CD4-positive, alpha-beta memory T cell (primary cell): ENCODE measurements at regions of chr10 and their contacts with region 1.

Region 1: GRCh38 chr10:89029785-89030437 is 39.3 kb downstream of the FAS start:
- DNase-seq: peak; percentile 48 to 63 (median 59)
- H3K4me3 ChIP-seq: no peak overlapping the region
- H3K4me3 Mint-ChIP-seq: peak overlapping the region in 1 of 8 donors; percentile 17
- H3K27ac ChIP-seq: no peak overlapping the region
- H3K27ac Mint-ChIP-seq: peak overlapping the region in 2 of 7 donors; percentile 5 to 42
- H3K4me1 ChIP-seq: peaks cover 4% of the 10 kb centered on the region
- H3K4me1 Mint-ChIP-seq: peaks cover 7 to 14% (median 9%) of the 10 kb centered on the region in 4 donors
- H3K27me3 ChIP-seq: no peaks in the 10 kb centered on the region
- H3K27me3 Mint-ChIP-seq: no peaks in the 10 kb centered on the region

Region 2: DNA sequence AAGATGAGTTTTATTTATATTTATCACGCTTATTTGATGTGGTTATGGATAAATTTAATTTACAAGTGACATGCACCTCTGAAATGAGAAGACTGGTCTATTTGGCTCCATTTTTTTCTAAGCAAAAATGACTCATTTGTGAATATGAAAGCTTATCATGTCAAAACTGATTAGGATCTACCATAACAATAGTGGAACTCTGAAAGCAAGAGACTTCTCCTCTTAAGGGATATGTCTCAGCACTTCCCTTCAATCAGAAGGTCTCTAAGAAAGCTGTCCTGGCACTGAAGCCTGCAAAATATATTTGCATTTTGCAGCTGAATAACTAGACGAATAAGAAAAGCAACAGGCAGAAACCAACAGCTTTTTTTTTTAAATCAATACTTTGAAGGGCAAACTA is 26.6 kb before region 1 on chr10:
- CTCF ChIA-PET with region 1: interaction called, 13 read pairs
- POLR2A ChIA-PET with region 1: interaction called, 3 read pairs
- intact Hi-C with region 1: no loop called
- DNase-seq: no peak
- H3K4me3 ChIP-seq: no peak overlapping the region
- H3K4me3 Mint-ChIP-seq: peak overlapping the region in 2 of 8 donors; percentile 88 to 89
- H3K27ac ChIP-seq: peak overlapping the region; percentile 74
- H3K27ac Mint-ChIP-seq: peak overlapping the region in 6 of 7 donors; percentile 81 to 98 (median 89)
- H3K4me1 ChIP-seq: peaks cover 83% of the 10 kb centered on the region
- H3K4me1 Mint-ChIP-seq: peaks cover 47 to 82% (median 64%) of the 10 kb centered on the region in 4 donors
- H3K27me3 ChIP-seq: no peaks in the 10 kb centered on the region
- H3K27me3 Mint-ChIP-seq: no peaks in the 10 kb centered on the region

Region 3: GRCh38 chr10:89079961-89080360 is 50.0 kb after region 1 on chr10:
- CTCF ChIA-PET with region 1: interaction called, 11 read pairs
- POLR2A ChIA-PET with region 1: interaction called, 3 read pairs
- intact Hi-C with region 1: loop called (anchors 5 kb)
- DNase-seq: no peak
- H3K4me3 ChIP-seq: no peak overlapping the region
- H3K4me3 Mint-ChIP-seq: no peak overlapping the region
- H3K27ac ChIP-seq: no peak overlapping the region
- H3K27ac Mint-ChIP-seq: no peak overlapping the region
- H3K4me1 ChIP-seq: peaks cover 25% of the 10 kb centered on the region
- H3K4me1 Mint-ChIP-seq: peaks cover 0 to 9% (median 8%) of the 10 kb centered on the region in 4 donors
- H3K27me3 ChIP-seq: no peaks in the 10 kb centered on the region
- H3K27me3 Mint-ChIP-seq: no peaks in the 10 kb centered on the region

Region 4: DNA sequence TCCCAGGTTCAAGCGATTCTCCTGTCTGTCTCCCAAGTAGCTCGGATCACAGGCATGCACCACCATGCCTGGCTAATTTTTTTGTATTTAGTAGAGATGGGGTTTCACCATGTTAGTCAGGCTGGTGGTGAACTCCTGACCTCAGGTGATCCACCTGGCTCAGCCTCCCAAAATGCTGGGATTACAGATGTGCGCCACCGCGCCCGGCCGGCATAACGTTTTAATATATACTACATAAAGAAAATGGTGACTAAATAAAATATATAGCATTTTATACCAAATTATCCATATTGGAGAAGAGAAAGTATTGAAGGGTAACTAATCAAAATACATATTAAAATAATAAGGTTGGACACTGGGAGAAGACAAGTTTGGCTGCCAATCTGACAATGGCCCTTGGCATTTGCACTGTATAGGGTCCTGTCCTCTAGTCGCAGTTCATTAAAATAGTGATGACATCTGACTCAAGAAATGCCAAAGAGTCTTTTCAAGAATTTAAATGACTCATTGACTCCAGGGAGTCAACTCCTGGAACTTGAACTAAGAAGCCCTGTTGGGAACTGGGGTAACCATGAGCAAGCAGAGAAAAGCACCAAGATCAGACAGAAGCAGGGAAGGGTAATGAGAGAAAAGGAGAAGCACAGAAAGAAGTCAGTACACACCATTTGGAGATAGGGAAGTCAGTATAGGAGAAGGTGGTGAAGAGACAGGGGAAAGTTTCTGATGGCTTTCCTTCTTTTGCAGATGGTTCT is 86.1 kb after region 1 on chr10:
- CTCF ChIA-PET with region 1: interaction called, 11 read pairs
- POLR2A ChIA-PET with region 1: no interaction called
- intact Hi-C with region 1: no loop called
- DNase-seq: no peak
- H3K4me3 ChIP-seq: no peak overlapping the region
- H3K4me3 Mint-ChIP-seq: no peak overlapping the region
- H3K27ac ChIP-seq: no peak overlapping the region
- H3K27ac Mint-ChIP-seq: no peak overlapping the region
- H3K4me1 ChIP-seq: peaks cover 2% of the 10 kb centered on the region
- H3K4me1 Mint-ChIP-seq: peaks cover 0 to 2% (median under 1%) of the 10 kb centered on the region in 4 donors
- H3K27me3 ChIP-seq: no peaks in the 10 kb centered on the region
- H3K27me3 Mint-ChIP-seq: peaks cover 15 to 17% of the 10 kb centered on the region in 2 donors

Region 5: DNA sequence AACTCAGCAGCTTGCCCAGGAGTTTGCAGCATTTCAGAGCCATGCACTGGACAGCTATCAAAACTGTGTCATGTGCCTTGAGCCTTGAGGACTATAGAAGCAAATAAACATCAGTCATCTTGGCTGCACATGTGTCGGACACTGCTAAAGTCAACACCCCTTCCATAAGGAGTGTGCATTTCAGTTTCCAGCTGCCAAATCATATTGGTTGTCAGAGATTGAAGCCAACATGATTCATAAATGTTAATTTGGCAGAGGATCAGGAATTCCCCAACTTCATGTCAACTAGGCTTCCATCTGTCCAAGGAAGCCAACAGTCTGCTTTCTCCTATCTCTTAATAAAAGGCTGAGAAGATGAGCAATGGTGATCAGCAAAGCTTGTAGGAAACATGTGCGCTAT is 472.6 kb after region 1 on chr10:
- CTCF ChIA-PET with region 1: no interaction called
- POLR2A ChIA-PET with region 1: no interaction called
- intact Hi-C with region 1: no loop called
- DNase-seq: no peak
- H3K4me3 ChIP-seq: no peak overlapping the region
- H3K4me3 Mint-ChIP-seq: no peak overlapping the region
- H3K27ac ChIP-seq: no peak overlapping the region
- H3K27ac Mint-ChIP-seq: no peak overlapping the region
- H3K4me1 ChIP-seq: no peaks in the 10 kb centered on the region
- H3K4me1 Mint-ChIP-seq: peaks cover 0 to 9% (median 2%) of the 10 kb centered on the region in 4 donors
- H3K27me3 ChIP-seq: no peaks in the 10 kb centered on the region
- H3K27me3 Mint-ChIP-seq: peaks cover 1 to 4% of the 10 kb centered on the region in 2 donors

Region 6: DNA sequence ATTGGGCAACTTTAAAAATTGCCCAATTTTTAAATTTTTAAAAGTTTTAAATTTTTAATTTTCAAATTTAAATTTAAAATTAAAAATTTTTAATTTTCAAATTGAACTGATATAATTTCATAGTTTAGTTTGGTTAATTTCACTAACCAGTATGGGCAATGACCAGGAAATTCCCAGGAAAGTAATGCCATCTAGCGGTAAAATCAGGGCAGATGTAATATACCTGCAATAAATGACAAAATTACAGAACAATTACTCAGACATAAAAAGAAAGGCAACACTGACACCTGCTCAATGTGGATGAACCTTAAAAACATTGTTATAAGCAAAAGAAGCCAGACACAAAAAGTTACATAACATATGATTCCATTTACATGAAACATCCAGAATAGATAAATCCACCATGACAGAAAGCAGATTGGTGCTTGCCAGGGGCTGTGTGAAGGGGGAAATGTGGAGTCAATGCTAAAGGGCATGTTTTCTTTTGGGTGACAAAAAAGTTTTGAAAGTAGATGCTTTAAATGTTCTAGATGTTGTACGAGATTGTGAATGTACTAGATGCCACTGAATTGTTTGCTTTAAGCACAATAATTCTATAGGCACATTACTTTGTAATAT is 534.1 kb after region 1 on chr10:
- CTCF ChIA-PET with region 1: interaction called, 3 read pairs
- POLR2A ChIA-PET with region 1: no interaction called
- intact Hi-C with region 1: loop called (anchors 10 kb)
- DNase-seq: peak in 4 of 5 donors; percentile 40 to 48 (median 44)
- H3K4me3 ChIP-seq: no peak overlapping the region
- H3K4me3 Mint-ChIP-seq: no peak overlapping the region
- H3K27ac ChIP-seq: no peak overlapping the region
- H3K27ac Mint-ChIP-seq: no peak overlapping the region
- H3K4me1 ChIP-seq: no peaks in the 10 kb centered on the region
- H3K4me1 Mint-ChIP-seq: no peaks in the 10 kb centered on the region
- H3K27me3 ChIP-seq: no peaks in the 10 kb centered on the region
- H3K27me3 Mint-ChIP-seq: peaks cover 8 to 11% of the 10 kb centered on the region in 2 donors